GM10248 (cell line): ENCODE measurements at regions of chr10 and their contacts with region 1.

Region 1: GRCh38 chr10:24617771-24618391 is 105.8 kb downstream of the ARHGAP21 start:
- DNase-seq: peak; percentile 36
- CTCF ChIP-seq: peak; percentile 74

Region 2: GRCh38 chr10:24603333-24603732 is 14.5 kb before region 1 on chr10:
- CTCF ChIA-PET with region 1: interaction called, 23 read pairs
- POLR2A ChIA-PET with region 1: no interaction called
- DNase-seq: no peak
- CTCF ChIP-seq: no peak

Region 3: DNA sequence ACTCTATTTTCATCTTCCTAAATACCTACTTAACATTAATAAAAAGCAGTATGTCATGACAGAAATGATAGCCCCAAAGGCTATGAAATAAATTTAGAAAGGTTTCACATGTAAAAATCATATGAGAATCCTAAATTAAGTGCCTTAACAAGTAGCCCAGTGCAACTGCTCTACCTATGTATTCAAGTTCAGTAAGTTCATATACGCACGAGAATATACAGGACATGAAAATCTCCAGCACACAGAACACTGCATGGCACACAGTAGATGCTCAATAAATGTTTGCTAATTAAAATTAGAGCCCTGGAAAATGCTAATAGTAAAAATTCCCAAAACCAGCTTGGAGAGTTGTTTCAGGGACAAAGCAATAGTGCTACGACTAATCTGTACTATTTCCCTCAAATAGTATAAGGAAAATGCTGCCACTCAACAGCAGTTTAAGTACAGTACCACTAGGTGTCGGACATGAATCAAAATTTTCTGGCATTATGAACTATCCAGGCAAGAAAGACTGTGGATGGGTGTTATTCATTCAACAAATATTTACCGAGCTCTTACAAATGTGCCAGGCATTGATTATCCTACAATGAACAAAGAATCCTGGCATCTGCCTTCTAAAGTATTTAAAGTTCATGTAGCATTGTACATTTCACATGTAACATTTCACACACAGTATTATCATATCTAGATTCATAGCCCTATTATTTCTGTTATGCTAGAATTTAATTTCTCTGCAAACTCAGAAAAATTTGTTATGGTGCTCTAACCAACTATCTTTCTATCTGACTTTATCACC is 24.9 kb after region 1 on chr10:
- CTCF ChIA-PET with region 1: interaction called, 11 read pairs
- POLR2A ChIA-PET with region 1: no interaction called
- DNase-seq: peak; percentile 44
- CTCF ChIP-seq: peak; percentile 74

Region 4: DNA sequence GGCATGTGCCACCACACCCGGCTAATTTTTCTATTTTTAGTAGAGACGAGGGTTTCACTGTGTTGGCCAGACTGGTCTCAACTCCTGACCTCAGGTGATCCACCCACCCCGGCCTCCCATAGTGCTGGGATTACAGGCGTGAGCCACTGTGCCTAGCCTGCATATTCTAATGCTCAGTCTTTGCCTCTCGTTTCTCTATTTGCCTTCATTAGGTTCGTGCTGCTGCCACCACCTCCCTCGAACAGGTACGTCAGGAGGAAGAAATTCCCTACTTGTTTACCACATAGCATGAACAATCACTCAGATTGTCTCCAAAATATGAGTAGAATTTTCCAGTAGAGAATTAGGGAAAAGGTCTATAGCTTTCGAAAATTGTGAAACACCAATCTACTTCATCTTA is 30.1 kb after region 1 on chr10:
- CTCF ChIA-PET with region 1: interaction called, 11 read pairs
- POLR2A ChIA-PET with region 1: no interaction called
- DNase-seq: no peak
- CTCF ChIP-seq: no peak